Naive thymus-derived CD4-positive, alpha-beta T cell (primary cell): ENCODE measurements at regions of chr7 and their contacts with region 1.

Region 1: GRCh38 chr7:38369816-38370493 is 96.5 kb upstream of the TARP start:
- DNase-seq: peak; percentile 39 to 79 (median 63)
- ATAC-seq: peak; percentile 89
- H3K4me3 ChIP-seq: no peak overlapping the region
- H3K4me3 Mint-ChIP-seq: peak overlapping the region; percentile 9 to 64 (median 56)
- H3K27ac ChIP-seq: peak overlapping the region; percentile 64
- H3K27ac Mint-ChIP-seq: peak overlapping the region in 8 of 9 donors; percentile 85 to 97 (median 92)
- H3K4me1 ChIP-seq: peaks cover 47% of the 10 kb centered on the region in 2 donors
- H3K4me1 Mint-ChIP-seq: peaks cover 33 to 79% (median 69%) of the 10 kb centered on the region in 7 donors
- H3K27me3 ChIP-seq: no peaks in the 10 kb centered on the region
- H3K27me3 Mint-ChIP-seq: no peaks in the 10 kb centered on the region

Region 2: GRCh38 chr7:37901236-37901827 is 468.6 kb before region 1 on chr7:
- CTCF ChIA-PET with region 1: interaction called, 3 read pairs
- POLR2A ChIA-PET with region 1: no interaction called
- intact Hi-C with region 1: loop called in 1 of 2 experiments (anchors 10 kb)
- DNase-seq: no peak
- ATAC-seq: no peak
- H3K4me3 ChIP-seq: no peak overlapping the region
- H3K4me3 Mint-ChIP-seq: no peak overlapping the region
- H3K27ac ChIP-seq: no peak overlapping the region
- H3K27ac Mint-ChIP-seq: no peak overlapping the region
- H3K4me1 ChIP-seq: no peaks in the 10 kb centered on the region
- H3K4me1 Mint-ChIP-seq: no peaks in the 10 kb centered on the region
- H3K27me3 ChIP-seq: no peaks in the 10 kb centered on the region
- H3K27me3 Mint-ChIP-seq: peaks cover 5 to 17% (median 9%) of the 10 kb centered on the region in 5 donors

Region 3: GRCh38 chr7:38542156-38542555 is 172.2 kb after region 1 on chr7:
- CTCF ChIA-PET with region 1: no interaction called
- POLR2A ChIA-PET with region 1: no interaction called
- intact Hi-C with region 1: no loop called
- DNase-seq: no peak
- ATAC-seq: no peak
- H3K4me3 ChIP-seq: no peak overlapping the region
- H3K4me3 Mint-ChIP-seq: no peak overlapping the region
- H3K27ac ChIP-seq: no peak overlapping the region
- H3K27ac Mint-ChIP-seq: no peak overlapping the region
- H3K4me1 ChIP-seq: no peaks in the 10 kb centered on the region
- H3K4me1 Mint-ChIP-seq: peaks cover 0 to 12% (median 0%) of the 10 kb centered on the region in 7 donors
- H3K27me3 ChIP-seq: peaks cover 0 to 3% of the 10 kb centered on the region in 2 donors
- H3K27me3 Mint-ChIP-seq: peaks cover 2 to 9% (median 6%) of the 10 kb centered on the region in 5 donors